ENCODE measurements at regions of chr6 and their contacts with region 1.

Region 1: GRCh38 chr6:142946181-142946923 is 1.4 kb upstream of the HIVEP2 start:
- DNase-seq: peak; percentile 98
- ATAC-seq: peak; percentile 83 to 90

Region 2: GRCh38 chr6:142184307-142184706 is 762.0 kb before region 1 on chr6:
- intact Hi-C with region 1: no loop called
- DNase-seq: no peak
- ATAC-seq: no peak

Region 3: DNA sequence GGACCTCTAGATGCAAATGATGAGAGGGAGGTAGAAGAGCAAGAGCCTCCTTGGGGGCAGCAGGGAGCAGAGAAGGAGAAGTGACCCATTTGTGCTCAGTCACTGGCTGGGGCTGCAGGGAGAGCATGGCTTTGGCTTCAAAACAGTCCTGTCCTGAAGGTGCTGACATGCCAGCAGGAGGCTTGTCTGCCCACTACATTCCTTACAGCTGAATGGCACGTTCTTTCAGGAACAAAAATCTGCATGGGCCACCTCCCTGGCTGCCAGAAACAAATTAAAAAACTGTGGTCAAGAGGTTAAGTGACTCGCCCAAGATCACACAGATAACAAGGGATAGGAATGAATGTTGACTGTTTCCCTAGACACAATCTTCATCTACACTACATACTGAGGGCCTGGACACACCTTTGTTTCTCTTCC is 190.1 kb before region 1 on chr6:
- intact Hi-C with region 1: loop called (anchors 10 kb)
- DNase-seq: no peak
- ATAC-seq: peak in 1 of 2 donors; percentile 80

Region 4: GRCh38 chr6:142819603-142820337 is 126.6 kb before region 1 on chr6:
- intact Hi-C with region 1: loop called in 1 of 2 experiments (anchors 10 kb)
- DNase-seq: no peak
- ATAC-seq: peak; percentile 39 to 62

Region 5: DNA sequence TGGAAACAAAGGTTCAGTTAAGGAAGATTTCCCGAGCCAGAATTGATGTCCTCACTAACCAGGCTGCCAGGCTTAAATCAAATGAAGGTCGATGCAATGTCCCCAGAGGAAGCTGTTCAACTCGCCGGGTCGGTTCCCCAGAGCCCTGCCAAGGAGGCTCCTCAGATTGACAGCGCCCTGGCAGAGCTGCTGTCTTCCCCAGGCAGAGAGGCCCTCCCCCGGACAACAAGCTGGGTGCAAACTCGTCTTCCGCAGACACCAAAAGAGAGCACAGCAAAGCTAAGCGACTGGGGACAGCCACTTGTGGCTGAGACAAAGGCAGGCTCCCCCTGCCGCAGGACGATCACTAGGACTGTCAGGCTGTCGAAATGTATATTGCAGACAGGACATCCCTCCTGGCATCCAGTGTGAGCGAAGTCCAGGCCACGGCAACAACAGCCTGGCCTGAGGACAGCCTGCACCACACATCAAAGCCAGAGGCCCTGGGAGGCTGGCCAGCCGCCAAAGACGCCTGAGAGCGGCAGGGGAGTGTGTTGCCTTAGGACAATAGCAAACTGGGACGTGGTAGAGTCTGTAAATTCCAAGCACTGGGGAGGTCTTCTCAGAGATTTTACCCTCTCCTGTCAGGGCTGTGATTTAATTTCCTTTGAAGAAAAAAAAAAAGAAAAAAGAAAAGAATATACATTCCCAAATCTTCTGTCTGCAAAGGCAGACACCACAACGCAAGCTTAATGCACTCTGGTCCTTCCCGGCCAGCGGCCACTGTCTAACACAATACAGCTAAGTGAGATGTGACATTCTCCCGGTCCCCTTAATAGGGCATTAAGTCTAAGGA is 100.5 kb before region 1 on chr6:
- intact Hi-C with region 1: loop called in 1 of 2 experiments (anchors 10 kb)
- DNase-seq: peak; percentile 92
- ATAC-seq: peak; percentile 94

Region 6: GRCh38 chr6:142871910-142872331 is 74.4 kb before region 1 on chr6:
- intact Hi-C with region 1: no loop called
- DNase-seq: peak; percentile 31
- ATAC-seq: peak; percentile 72 to 89

Region 7: DNA sequence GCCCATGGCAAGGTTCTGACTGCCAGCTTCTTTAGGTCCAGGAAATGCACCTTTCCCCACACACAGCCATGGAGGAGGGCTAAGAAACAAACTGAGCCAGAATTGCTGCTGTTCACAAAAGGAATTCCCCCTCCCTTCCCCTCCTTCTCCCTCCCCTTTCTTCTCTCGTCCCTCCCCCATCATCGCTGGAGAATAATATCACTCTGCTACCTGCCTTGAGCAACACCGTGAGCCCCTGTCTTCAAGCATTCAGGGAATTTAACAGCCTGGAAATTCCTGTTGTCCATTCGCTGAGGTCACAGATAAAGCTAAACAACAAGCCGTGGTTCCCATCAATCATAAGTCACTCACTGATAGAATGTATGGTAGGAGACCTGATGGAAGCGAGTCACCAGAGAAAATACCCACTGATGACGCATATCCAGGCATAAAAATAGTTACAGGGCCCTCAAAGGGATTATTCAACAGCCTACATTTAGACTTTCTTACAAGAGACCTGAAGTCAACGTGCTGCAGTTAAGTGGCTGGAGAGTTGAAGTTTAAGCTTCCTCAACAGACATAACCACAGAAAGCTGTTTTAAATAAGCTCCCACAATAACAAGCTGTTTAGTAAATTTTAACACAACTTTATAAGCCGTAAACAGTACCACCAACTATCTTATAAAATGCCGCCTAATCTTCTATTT is 61.0 kb before region 1 on chr6:
- intact Hi-C with region 1: loop called in 1 of 2 experiments (anchors 2 kb)
- DNase-seq: peak; percentile 35
- ATAC-seq: peak; percentile 89 to 91

Measured in left cardiac atrium (tissue), 4 donors.